ENCODE measurements at regions of chr4 and their contacts with region 1.

Region 1: GRCh38 chr4:89434364-89434988 is 126.9 kb upstream of the GPRIN3 start:
- DNase-seq: no peak
- H3K4me3 ChIP-seq: no peak overlapping the region
- H3K27me3 ChIP-seq: peaks cover 2% of the 10 kb centered on the region
- CTCF ChIP-seq: peak; percentile 77

Region 2: DNA sequence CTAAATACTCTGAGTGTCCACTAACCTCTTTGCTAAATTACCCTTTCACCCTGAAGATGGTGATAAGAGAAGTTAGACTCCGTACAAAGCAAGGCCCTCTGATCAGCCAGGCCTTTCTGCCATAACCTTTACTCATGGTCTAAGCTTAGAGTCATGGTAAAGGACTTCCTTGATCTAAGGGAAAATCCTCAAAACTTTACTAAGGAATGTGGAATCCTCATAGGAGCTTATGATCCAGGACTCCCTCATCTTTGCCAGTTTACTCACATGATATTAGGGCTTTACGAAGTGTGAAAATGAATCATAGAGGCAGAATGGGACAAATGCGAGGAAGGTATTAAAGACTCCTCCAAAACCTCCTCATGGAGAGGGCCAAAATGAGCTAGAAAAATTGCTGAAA is 369.6 kb before region 1 on chr4:
- CTCF ChIA-PET with region 1: no interaction called
- POLR2A ChIA-PET with region 1: no interaction called
- DNase-seq: no peak
- H3K4me3 ChIP-seq: no peak overlapping the region
- H3K27me3 ChIP-seq: no peaks in the 10 kb centered on the region
- CTCF ChIP-seq: no peak

Region 3: GRCh38 chr4:89254847-89255246 is 179.6 kb before region 1 on chr4:
- CTCF ChIA-PET with region 1: interaction called, 15 read pairs
- POLR2A ChIA-PET with region 1: no interaction called
- DNase-seq: no peak
- H3K4me3 ChIP-seq: no peak overlapping the region
- H3K27me3 ChIP-seq: no peaks in the 10 kb centered on the region
- CTCF ChIP-seq: peak; percentile 76

Region 4: DNA sequence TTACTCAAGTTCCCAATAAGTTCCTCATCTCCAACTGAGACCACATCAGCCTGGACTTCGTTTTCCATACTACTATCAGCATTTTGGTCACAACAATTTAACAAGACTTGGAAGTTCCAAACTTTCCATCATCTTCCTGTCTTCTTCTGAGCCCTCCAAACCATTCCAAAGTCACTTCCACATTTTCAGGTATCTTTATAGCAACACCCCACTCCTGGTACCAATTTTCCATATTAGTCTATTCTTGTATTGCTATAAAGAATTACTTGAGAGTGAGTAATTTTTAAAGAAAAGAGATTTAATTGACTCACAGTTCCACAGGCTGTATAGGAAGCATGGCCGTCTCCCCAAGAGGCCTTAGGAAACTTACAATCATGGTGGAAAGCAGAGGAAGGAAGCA is 11.7 kb after region 1 on chr4:
- CTCF ChIA-PET with region 1: interaction called, 10 read pairs
- POLR2A ChIA-PET with region 1: no interaction called
- DNase-seq: no peak
- H3K4me3 ChIP-seq: no peak overlapping the region
- H3K27me3 ChIP-seq: no peaks in the 10 kb centered on the region
- CTCF ChIP-seq: no peak